GM13977 (cell line): ENCODE measurements at regions of chr15 and their contacts with region 1.

Region 1: DNA sequence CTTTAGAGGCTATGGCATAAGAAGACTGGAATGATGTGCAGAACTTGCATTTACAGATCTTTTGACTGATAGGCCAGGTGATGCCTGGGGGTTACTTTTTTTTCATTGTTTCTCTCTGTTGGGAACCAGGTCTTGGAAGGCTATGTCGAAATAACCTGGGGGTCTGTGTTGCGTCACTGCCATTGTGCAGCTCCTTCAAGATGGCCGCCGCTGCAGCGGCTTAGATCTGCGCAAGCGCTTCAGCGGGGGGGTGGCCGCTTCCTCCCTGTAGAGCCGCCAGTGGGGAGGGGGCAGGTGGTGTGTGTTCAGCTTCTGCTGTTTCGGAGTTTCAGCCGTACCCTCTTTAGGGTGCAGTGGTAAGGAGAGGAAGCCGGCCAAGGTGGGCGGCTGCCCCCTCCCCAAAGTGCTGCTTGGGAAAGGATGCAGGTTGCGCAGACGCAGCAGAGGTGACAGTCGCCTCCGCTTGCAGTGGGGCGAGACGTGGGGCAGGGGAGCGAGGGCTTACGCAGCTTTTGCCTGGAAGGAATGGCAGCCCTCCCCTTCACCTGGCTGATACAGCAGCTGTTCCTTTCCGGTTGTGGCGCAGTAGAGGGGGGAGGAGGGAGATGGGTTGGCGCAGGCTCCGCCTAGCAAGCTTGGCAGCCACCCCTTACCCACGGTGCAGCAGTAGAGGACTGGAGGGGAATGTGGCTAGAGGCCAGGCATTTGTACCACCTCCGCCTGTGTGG is 1.5 kb downstream of the SNRPN start:
- DNase-seq: peak; percentile 67
- CTCF ChIP-seq: no peak

Region 2: DNA sequence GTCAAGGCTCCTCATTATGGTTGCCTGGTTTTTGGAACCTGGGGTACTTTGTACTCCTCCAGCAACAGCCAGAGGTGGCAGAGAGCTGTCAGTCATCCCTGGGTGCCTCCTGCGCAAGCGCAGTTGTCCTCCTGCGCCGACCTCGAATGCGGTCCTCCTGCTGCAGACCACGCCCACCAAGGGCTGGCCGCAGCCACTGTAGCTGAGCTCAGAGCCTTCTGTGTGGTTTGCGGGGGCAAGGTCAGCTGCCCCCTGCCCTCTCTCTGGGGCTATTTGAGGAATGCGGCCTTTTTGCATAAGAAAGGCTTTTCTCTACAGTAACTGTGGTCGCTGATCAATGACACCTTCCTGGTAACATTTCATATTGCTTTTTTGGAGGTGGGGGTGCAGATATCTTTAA is 132.8 kb before region 1 on chr15:
- in situ Hi-C with region 1: no loop called
- DNase-seq: no peak
- CTCF ChIP-seq: no peak

Region 3: GRCh38 chr15:25438601-25439368 is 482.5 kb after region 1 on chr15 and contains the start of gene UBE3A:
- in situ Hi-C with region 1: loop called (anchors 25 kb)
- DNase-seq: peak; percentile 95
- CTCF ChIP-seq: peak; percentile 46

Region 4: GRCh38 chr15:25609371-25609770 is 653.1 kb after region 1 on chr15:
- in situ Hi-C with region 1: no loop called
- DNase-seq: no peak
- CTCF ChIP-seq: no peak